ENCODE measurements at regions of chr19 and their contacts with region 1.

Region 1: GRCh38 chr19:3721131-3721886 is 13.1 kb downstream of the TJP3 start:
- DNase-seq: peak; percentile 96 to 98 (median 98)
- ATAC-seq: peak; percentile 85
- H3K4me3 ChIP-seq: 0 out of 2 replicates have a peak overlapping the region, but pooled peaks have one; percentile 10
- H3K27ac ChIP-seq: no peak overlapping the region
- H3K4me1 ChIP-seq: peaks cover 7 to 31% of the 10 kb centered on the region in 2 experiments; a peak in 3 of 5 replicates
- H3K27me3 ChIP-seq: no peaks in the 10 kb centered on the region
- CTCF ChIP-seq: peak in 1 of 3 experiments; percentile 11; a peak in 1 of 6 replicates
- EP300 ChIP-seq: peak; percentile 65
- POLR2A ChIP-seq: no peak
- RAD21 ChIP-seq: no peak

Region 2: DNA sequence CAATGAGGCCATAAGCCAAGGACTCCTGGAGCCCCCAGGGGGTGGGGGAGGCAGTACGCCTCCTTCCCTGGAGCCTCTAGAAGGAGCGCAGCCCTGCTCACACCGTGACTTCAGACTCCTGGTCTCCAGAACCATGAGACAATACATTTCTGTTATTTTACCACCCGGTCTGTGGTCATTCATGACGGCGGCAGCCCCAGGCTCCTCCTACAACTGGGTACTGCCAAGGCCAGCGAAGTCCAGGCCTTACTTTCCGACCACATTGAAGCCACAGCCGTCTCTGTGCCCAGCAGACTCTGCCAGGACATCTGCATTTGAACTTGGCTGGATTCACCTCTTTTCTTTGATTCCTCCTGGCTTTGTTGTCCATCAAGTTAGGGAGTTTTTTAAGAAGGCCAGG is 1029.4 kb before region 1 on chr19:
- CTCF ChIA-PET with region 1: no interaction called
- POLR2A ChIA-PET with region 1: no interaction called
- in situ Hi-C with region 1: no loop called
- intact Hi-C with region 1: no loop called
- DNase-seq: no peak
- ATAC-seq: no peak
- H3K4me3 ChIP-seq: no peak overlapping the region
- H3K27ac ChIP-seq: no peak overlapping the region
- H3K4me1 ChIP-seq: no peaks in the 10 kb centered on the region; a peak in 1 of 5 replicates
- H3K27me3 ChIP-seq: peaks cover 13 to 69% of the 10 kb centered on the region in 2 experiments
- CTCF ChIP-seq: no peak
- EP300 ChIP-seq: no peak
- POLR2A ChIP-seq: no peak
- RAD21 ChIP-seq: no peak

Region 3: DNA sequence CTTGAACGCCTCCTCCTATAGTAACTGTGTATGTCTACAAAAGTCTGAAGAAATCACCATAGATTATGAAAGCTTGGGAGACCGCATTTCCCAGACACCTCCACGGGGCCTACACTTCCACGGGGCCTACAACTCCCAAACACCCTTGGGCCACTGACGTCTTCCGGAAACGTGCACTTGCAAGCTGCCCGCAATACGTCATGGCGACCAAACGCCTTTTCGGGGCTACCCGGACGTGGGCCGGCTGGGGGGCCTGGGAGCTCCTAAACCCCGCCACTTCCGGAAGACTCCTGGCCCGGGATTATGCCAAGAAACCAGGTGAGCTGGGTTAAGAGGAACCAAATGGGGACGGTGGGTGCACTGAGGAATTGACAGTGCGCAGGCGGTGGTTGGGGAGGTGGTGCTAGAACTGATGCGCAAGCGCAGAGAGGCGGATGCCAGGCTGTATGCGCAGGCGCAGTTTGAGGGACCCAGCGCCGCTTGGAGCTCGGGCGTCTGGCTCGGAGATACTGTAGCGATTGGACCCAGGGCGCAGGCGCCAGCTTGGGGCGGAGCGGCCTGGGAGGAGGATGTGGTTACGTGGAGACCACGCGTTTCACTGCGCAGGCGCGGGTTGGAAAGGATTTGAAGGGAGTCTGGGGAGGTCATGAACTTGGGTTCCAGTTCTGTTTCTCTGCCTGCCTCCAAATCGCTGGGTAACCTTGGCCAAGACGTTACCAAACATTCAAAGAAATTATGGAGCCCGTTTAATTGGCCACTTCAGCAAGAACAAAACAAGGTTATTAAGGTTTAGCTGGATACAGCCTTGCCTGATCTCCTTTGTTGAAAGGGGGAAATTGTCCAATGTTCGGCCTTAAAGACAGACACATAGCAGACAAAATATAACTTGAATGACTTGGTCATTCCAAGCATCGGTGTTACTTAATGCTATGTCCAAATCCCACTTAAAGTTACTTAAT is 41.5 kb after region 1 on chr19 and contains the start of gene MRPL54:
- CTCF ChIA-PET with region 1: no interaction called
- POLR2A ChIA-PET with region 1: no interaction called
- in situ Hi-C with region 1: no loop called
- intact Hi-C with region 1: loop called (anchors 2 kb)
- DNase-seq: peak; percentile 99 to 100 (median 99)
- ATAC-seq: peak; percentile 92
- H3K4me3 ChIP-seq: peak within 1 kb of the TSS; percentile 100
- H3K27ac ChIP-seq: peak within 1 kb of the TSS; percentile 99
- H3K4me1 ChIP-seq: peaks cover 8 to 37% of the 10 kb centered on the region in 2 experiments; a peak in 4 of 5 replicates
- H3K27me3 ChIP-seq: no peaks in the 10 kb centered on the region
- CTCF ChIP-seq: no peak
- EP300 ChIP-seq: peak; percentile 33
- POLR2A ChIP-seq: peak; percentile 97
- RAD21 ChIP-seq: no peak
- polyA plus RNA-seq, gene MRPL54: 3.5 to 13.6 TPM

Region 4: GRCh38 chr19:3821857-3822364 is 100.6 kb after region 1 on chr19:
- CTCF ChIA-PET with region 1: interaction called, 3 read pairs
- POLR2A ChIA-PET with region 1: no interaction called
- in situ Hi-C with region 1: no loop called
- intact Hi-C with region 1: loop called (anchors 5 kb)
- DNase-seq: peak; percentile 82 to 93 (median 90)
- ATAC-seq: peak; percentile 95
- H3K4me3 ChIP-seq: no peak overlapping the region
- H3K27ac ChIP-seq: no peak overlapping the region
- H3K4me1 ChIP-seq: peaks cover 5 to 61% of the 10 kb centered on the region in 2 experiments; a peak in 4 of 5 replicates
- H3K27me3 ChIP-seq: no peaks in the 10 kb centered on the region
- CTCF ChIP-seq: peak; percentile 91 to 99 (median 95)
- EP300 ChIP-seq: no peak; the same call in 1 of the 2 replicates
- POLR2A ChIP-seq: no peak
- RAD21 ChIP-seq: peak; percentile 76 to 87

Measured in K562 (cell line).